ENCODE measurements at regions of chr15 and their contacts with region 1.

Region 1: GRCh38 chr15:50697109-50697797 is 10.7 kb upstream of the TRPM7 start:
- DNase-seq: no peak
- H3K4me3 ChIP-seq: no peak overlapping the region
- H3K27ac ChIP-seq: no peak overlapping the region
- H3K4me1 ChIP-seq: no peaks in the 10 kb centered on the region
- H3K27me3 ChIP-seq: no peaks in the 10 kb centered on the region
- CTCF ChIP-seq: no peak
- POLR2A ChIP-seq: no peak

Region 2: GRCh38 chr15:50758762-50759161 is 61.5 kb after region 1 on chr15:
- intact Hi-C with region 1: loop called in 1 of 2 experiments (anchors 10 kb)
- DNase-seq: peak in 4 of 7 donors; percentile 32 to 47 (median 38)
- H3K4me3 ChIP-seq: no peak overlapping the region
- H3K27ac ChIP-seq: peak overlapping the region in 1 of 5 donors; percentile 22
- H3K4me1 ChIP-seq: peaks cover 22 to 33% of the 10 kb centered on the region in 2 donors
- H3K27me3 ChIP-seq: no peaks in the 10 kb centered on the region
- CTCF ChIP-seq: no peak
- POLR2A ChIP-seq: no peak

Region 3: GRCh38 chr15:50908210-50909009 is 211.2 kb after region 1 on chr15 and contains the start of gene AP4E1:
- intact Hi-C with region 1: no loop called
- DNase-seq: peak; percentile 88 to 96 (median 91)
- H3K4me3 ChIP-seq: peak within 1 kb of the TSS; percentile 65 to 100 (median 84)
- H3K27ac ChIP-seq: peak within 1 kb of the TSS; percentile 56 to 96 (median 93)
- H3K4me1 ChIP-seq: peaks cover 11 to 31% of the 10 kb centered on the region in 2 donors
- H3K27me3 ChIP-seq: no peaks in the 10 kb centered on the region
- CTCF ChIP-seq: peak; percentile 92 to 100 (median 98)
- POLR2A ChIP-seq: peak; percentile 24 to 77
- total RNA-seq, gene AP4E1: 5.4 to 23.0 (median 9.9) TPM